AG04449 (cell line): ENCODE measurements at regions of chr16 and their contacts with region 1.

Region 1: DNA sequence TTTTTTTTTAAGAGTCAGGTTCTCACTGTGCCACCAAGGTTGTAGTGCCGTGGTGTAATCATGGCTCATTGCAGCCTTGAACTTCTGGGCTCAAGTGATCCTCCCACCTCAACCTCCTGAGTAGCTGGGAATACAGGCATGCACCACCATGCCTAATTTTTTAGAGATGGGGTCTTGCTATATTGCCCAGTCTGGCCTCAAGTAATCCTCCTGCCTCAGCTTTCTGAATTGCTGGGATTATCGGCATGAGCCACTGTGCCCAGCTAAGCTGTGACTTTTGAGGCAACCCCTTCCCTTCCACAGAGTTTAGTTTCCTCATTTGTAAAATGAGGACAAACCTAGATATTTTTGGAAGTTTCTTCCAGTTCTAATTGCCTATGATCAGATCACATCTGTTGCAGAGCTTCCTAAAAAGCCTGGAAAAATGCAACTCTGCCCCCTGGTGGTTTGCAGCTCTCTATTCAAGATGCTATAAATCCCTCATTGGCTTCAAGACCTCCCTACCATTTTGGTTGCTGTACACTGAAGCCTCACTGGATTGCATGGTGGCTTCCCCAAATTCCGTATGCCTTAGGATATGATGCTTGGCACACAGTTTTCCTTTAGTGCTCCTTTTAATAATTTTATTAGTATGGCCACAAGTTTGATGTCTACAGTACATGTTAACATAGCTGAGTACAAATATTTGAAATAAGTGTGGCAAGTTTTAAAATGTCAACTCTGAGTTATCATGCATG is 19.3 kb downstream of the GDE1 start:
- DNase-seq: no peak
- H3K4me3 ChIP-seq: no peak overlapping the region
- CTCF ChIP-seq: peak; percentile 68

Region 2: GRCh38 chr16:19236561-19237209 is 265.9 kb before region 1 on chr16:
- CTCF ChIA-PET with region 1: no interaction called
- POLR2A ChIA-PET with region 1: no interaction called
- DNase-seq: no peak
- H3K4me3 ChIP-seq: no peak overlapping the region
- CTCF ChIP-seq: no peak

Region 3: DNA sequence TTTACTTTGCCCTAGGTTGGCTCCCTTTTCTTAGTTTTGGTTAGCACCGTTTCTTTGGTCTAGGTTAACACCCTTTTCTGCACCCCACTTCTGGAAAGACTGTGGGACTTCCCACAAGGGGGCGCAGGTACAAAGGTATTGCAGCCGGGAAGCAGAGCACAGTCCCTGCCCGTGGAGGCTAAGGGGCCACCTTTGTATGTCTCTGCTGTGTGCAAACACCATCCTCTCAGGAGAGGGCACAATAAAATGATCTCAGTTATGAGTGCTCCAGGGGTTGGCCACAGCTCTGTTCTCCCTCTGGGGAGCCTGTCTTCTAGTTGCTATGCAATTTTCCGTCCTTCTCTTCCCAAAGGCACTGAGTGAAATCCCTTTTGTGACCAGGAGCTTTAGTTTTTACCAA is 113.3 kb before region 1 on chr16:
- CTCF ChIA-PET with region 1: interaction called, 25 read pairs
- POLR2A ChIA-PET with region 1: no interaction called
- DNase-seq: no peak
- H3K4me3 ChIP-seq: no peak overlapping the region
- CTCF ChIP-seq: peak; percentile 14

Region 4: GRCh38 chr16:19488213-19488640 is 14.3 kb before region 1 on chr16:
- CTCF ChIA-PET with region 1: interaction called, 16 read pairs
- POLR2A ChIA-PET with region 1: no interaction called
- DNase-seq: no peak
- H3K4me3 ChIP-seq: no peak overlapping the region
- CTCF ChIP-seq: no peak

Region 5: DNA sequence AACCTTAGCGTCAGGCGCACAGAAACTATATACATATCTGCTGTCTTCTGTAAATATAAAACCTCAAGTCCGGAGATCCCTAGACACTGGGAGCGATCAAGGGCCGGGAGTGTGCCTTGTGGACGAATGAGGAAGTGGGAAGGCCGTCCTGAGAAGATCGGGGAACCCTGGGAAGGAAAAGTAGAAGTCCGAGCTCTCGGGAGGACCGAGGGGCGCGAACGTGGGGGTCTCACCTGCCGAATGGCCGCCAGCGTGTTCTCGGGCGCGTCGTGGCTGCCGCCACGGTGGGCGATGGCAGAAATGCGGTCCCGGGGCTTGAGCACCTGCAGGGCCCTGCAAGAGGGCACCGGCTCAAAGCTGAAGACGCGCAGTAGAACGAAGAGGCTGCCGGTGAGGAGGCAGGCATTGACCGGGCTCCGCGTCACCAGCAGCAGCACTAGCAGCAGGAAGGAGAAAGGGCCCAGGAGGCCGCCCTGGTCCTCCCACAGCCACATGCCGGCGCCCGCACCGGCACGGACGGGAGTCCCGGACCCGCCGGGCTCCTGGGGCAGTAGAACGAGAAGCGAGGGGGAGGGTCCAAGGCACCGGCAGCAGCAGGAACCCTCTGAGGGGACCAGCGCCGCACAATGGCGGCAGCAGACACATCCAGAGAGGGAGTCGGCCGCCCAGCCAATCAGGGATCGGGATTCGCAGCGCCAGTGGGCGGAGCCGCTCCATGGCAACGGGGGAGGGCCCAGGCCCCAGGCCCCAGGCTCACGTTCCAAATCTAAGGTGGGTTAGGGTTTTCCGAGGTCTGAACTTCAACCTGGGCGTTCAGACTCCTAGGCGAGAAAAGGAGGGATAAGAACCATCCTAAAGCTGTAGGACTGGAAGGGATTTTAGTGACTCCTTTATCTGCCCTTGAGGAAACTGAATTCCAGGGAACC is 19.2 kb after region 1 on chr16 and contains the start of gene GDE1:
- CTCF ChIA-PET with region 1: interaction called, 59 read pairs
- POLR2A ChIA-PET with region 1: interaction called, 3 read pairs
- DNase-seq: no peak
- H3K4me3 ChIP-seq: peak within 1 kb of the TSS; percentile 95
- CTCF ChIP-seq: peak; percentile 70